Head of caudate nucleus (tissue), 42 donors: ENCODE measurements at regions of chr20 and their contacts with region 1.

Region 1: GRCh38 chr20:46132705-46133120 is 14.6 kb downstream of the CD40 start:
- DNase-seq: peak; percentile 55 to 90 (median 78)

Region 2: DNA sequence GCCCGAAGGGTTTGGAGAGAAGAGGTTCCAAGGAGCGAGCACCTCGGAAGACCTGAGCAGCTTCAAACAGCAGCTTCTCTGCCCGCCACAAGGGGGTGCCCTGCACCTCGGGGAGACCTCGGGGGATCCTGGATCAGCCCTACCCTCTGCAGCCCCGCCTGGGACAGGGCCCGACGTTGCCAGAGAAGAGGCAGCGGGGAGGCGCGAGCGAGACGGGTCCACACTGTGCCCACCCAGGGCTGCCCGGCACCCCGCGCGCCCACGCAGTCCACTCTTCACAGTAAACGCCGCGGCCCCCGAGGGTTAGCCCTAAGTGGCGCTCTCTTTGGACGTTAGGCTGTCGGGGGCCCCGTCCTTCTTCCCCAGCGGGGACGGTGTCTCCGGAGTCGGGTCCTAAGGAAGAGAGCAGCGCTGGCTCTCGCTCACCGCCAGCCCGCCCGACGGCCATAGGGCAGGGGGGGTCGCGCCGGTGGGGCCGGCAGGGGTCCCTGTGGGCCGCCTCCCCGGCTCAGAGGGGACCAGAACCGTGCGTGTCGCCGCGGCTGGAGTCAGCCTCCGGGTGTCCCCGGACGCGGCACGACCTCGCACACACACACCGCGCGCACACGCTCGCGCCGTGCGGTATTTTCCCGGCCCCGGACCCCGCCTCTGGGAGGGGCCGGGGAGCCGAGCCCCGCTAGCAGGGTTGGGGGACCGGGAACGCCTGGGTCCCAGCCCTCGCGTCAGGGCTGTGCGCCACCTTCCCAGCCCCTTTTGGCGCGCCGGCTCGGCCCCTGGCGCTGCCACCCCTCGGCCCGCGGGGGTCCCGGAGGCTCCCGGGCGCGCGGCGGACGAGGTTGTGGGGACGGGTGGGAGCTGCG is 174.7 kb after region 1 on chr20:
- intact Hi-C with region 1: loop called (anchors 10 kb)
- DNase-seq: peak; percentile 12 to 78 (median 62)

Region 3: DNA sequence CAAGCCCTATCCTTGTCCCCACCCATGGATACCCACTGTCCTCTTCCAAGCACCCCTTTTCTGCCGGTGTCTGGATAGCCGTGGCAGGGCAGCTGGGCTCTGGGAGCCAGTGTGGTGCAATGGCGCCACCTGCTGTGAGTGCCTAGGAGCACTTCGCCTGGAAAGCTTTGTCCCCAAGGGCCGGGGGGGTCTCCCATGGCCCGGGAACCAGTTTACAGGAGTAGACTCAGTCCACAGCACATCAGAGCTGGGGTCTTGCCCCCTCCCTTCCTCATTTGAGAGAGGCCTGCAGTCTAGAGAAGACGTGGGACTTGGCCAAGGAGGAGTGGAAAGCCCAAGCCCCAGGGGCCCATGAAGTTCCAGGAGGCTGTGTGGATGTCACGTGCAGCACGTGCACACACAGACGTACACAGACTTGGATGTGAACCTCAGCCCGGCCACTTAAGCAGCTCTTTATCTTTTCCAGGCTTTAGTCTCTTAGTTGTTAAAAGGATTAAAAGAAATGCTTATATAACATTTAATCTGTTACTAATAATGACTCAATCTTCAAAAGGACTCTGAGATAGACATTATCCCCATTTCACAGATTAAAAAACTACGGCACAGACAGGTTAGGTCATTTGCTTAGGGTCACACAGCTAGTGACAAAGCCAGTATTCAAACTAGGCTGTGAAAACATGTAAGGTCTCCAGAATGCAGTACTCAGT is 216.5 kb after region 1 on chr20:
- intact Hi-C with region 1: loop called (anchors 2 kb)
- DNase-seq: peak; percentile 43 to 88 (median 76)

Region 4: GRCh38 chr20:46446851-46447250 is 314.1 kb after region 1 on chr20:
- intact Hi-C with region 1: loop called (anchors 10 kb)
- DNase-seq: no peak